Activated naive CD4-positive, alpha-beta T cell treated with anti-CD3 and anti-CD28 coated beads, Interleukin-2, amount 10 ng/mL, durations not matched to agents 7 days and 5 days (primary cell): ENCODE measurements at regions of chr7 and their contacts with region 1.

Region 1: GRCh38 chr7:28921822-28922221 is 36.3 kb downstream of the TRIL start:
- DNase-seq: peak; percentile 43
- H3K4me3 Mint-ChIP-seq: no peak overlapping the region
- H3K27ac Mint-ChIP-seq: no peak overlapping the region
- H3K4me1 Mint-ChIP-seq: peaks cover 14% of the 10 kb centered on the region
- H3K27me3 Mint-ChIP-seq: peaks cover 19% of the 10 kb centered on the region

Region 2: GRCh38 chr7:28893886-28894285 is 27.9 kb before region 1 on chr7:
- CTCF ChIA-PET with region 1: no interaction called
- DNase-seq: no peak
- H3K4me3 Mint-ChIP-seq: no peak overlapping the region
- H3K27ac Mint-ChIP-seq: no peak overlapping the region
- H3K4me1 Mint-ChIP-seq: no peaks in the 10 kb centered on the region
- H3K27me3 Mint-ChIP-seq: peaks cover 9% of the 10 kb centered on the region

Region 3: GRCh38 chr7:28904578-28905048 is 17.2 kb before region 1 on chr7:
- CTCF ChIA-PET with region 1: interaction called, 11 read pairs
- DNase-seq: no peak
- H3K4me3 Mint-ChIP-seq: no peak overlapping the region
- H3K27ac Mint-ChIP-seq: no peak overlapping the region
- H3K4me1 Mint-ChIP-seq: no peaks in the 10 kb centered on the region
- H3K27me3 Mint-ChIP-seq: no peaks in the 10 kb centered on the region

Region 4: DNA sequence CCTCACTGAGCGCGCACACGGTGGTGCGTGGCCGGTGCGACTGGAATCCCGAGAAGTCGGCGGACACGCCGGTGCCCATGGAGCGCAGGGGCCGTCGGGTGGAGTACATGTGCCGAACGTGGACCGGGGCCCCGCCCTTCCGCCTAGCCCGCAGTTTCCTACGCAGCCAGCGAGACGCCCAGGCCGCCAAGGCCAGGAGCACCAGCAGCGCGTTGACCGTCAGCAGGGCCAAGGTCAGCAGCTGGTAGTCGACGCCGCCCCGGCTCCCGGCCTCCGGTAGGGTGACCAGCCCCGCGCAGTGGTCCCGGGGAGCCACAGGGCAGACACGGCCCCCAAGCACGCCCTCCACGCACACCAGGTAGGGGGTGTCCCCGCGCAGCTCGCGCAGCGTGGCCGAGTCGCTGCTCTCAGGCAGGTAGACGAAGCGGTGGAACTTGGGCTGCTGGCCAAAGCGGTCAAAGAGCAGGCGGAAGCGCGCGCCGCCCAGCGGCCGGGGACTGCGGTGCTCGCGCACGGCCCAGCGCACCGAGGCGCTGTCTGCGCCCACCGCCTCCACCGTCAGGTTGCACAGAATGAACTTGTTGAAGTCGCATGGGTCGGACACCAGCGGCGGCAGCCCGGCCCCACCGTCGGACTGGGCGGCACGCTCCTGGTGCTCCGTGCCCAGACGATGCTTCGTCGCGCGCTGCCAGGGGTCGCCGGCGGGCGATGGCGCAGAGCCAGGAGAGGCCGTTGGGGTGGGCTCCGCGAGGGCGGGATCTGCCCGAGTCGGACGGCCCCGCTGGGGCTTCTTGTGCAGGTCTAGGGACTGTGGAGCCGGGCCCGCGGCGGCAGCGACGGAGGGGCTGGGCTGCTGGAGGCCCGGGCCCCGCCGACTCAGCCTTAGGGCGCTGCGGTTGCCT is 34.1 kb after region 1 on chr7:
- CTCF ChIA-PET with region 1: interaction called, 33 read pairs
- DNase-seq: peak; percentile 27
- H3K4me3 Mint-ChIP-seq: no peak overlapping the region
- H3K27ac Mint-ChIP-seq: no peak overlapping the region
- H3K4me1 Mint-ChIP-seq: peaks cover 9% of the 10 kb centered on the region
- H3K27me3 Mint-ChIP-seq: peaks cover 65% of the 10 kb centered on the region